ENCODE measurements at regions of chr19 and their contacts with region 1.

Region 1: DNA sequence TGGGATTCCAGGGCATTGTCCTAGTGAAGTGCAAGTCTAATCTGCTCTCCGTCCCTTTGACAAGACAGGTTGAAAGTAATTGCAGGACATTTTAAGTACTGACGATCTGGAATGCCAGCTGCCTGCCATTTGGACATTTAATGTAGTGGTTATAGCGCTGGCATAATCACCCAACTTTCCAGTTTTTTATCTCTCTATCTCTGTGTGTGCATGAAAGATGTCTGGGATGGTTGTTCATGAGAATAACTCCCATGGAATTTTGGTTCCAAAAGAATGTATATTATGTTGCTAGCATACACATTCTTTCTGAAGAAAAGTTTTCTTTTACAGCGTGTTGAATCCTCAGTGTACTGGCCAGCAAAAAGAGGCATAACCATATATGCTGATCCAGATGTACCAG is 53.6 kb downstream of the TDRD12 start:
- DNase-seq: no peak
- H3K4me3 ChIP-seq: no peak overlapping the region
- H3K4me3 Mint-ChIP-seq: no peak overlapping the region
- H3K27ac Mint-ChIP-seq: no peak overlapping the region
- H3K4me1 ChIP-seq: no peaks in the 10 kb centered on the region
- H3K4me1 Mint-ChIP-seq: no peaks in the 10 kb centered on the region
- H3K27me3 ChIP-seq: no peaks in the 10 kb centered on the region
- H3K27me3 Mint-ChIP-seq: peaks cover 3% of the 10 kb centered on the region
- CTCF ChIP-seq: no peak

Region 2: DNA sequence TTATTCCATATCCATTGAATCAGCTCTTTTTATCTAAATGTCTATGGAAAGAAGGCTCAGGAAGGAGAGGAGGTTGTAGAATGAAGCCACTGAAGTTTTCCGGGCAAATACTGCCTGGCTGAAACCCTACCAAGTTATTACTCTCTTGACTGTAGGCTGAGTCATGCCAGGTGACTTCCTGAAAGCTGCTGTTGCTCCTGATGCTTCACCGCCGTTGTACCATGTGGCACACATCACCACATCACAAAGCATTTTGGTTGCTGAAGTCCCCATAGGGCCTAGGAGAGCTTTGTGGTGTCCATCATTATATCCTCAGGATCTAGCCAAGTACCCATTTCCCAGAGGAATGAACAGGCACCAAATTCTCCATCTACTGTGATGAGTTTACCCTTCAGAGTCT is 64.7 kb before region 1 on chr19:
- CTCF ChIA-PET with region 1: no interaction called
- POLR2A ChIA-PET with region 1: no interaction called
- intact Hi-C with region 1: no loop called
- DNase-seq: no peak
- H3K4me3 ChIP-seq: no peak overlapping the region
- H3K4me3 Mint-ChIP-seq: no peak overlapping the region
- H3K27ac Mint-ChIP-seq: no peak overlapping the region
- H3K4me1 ChIP-seq: no peaks in the 10 kb centered on the region
- H3K4me1 Mint-ChIP-seq: no peaks in the 10 kb centered on the region
- H3K27me3 ChIP-seq: no peaks in the 10 kb centered on the region
- H3K27me3 Mint-ChIP-seq: no peaks in the 10 kb centered on the region
- CTCF ChIP-seq: no peak

Region 3: GRCh38 chr19:32748497-32748896 is 24.6 kb before region 1 on chr19:
- CTCF ChIA-PET with region 1: interaction called, 11 read pairs
- POLR2A ChIA-PET with region 1: no interaction called
- intact Hi-C with region 1: no loop called
- DNase-seq: peak in 1 of 2 experiments; percentile 39
- H3K4me3 ChIP-seq: no peak overlapping the region
- H3K4me3 Mint-ChIP-seq: no peak overlapping the region
- H3K27ac Mint-ChIP-seq: no peak overlapping the region
- H3K4me1 ChIP-seq: no peaks in the 10 kb centered on the region
- H3K4me1 Mint-ChIP-seq: no peaks in the 10 kb centered on the region
- H3K27me3 ChIP-seq: no peaks in the 10 kb centered on the region
- H3K27me3 Mint-ChIP-seq: no peaks in the 10 kb centered on the region
- CTCF ChIP-seq: peak; percentile 51 to 69

Region 4: GRCh38 chr19:32809254-32809653 is 36.1 kb after region 1 on chr19:
- CTCF ChIA-PET with region 1: no interaction called
- POLR2A ChIA-PET with region 1: no interaction called
- intact Hi-C with region 1: no loop called
- DNase-seq: no peak
- H3K4me3 ChIP-seq: no peak overlapping the region
- H3K4me3 Mint-ChIP-seq: no peak overlapping the region
- H3K27ac Mint-ChIP-seq: no peak overlapping the region
- H3K4me1 ChIP-seq: peaks cover 17% of the 10 kb centered on the region
- H3K4me1 Mint-ChIP-seq: peaks cover 11% of the 10 kb centered on the region
- H3K27me3 ChIP-seq: no peaks in the 10 kb centered on the region
- H3K27me3 Mint-ChIP-seq: no peaks in the 10 kb centered on the region
- CTCF ChIP-seq: no peak

Region 5: DNA sequence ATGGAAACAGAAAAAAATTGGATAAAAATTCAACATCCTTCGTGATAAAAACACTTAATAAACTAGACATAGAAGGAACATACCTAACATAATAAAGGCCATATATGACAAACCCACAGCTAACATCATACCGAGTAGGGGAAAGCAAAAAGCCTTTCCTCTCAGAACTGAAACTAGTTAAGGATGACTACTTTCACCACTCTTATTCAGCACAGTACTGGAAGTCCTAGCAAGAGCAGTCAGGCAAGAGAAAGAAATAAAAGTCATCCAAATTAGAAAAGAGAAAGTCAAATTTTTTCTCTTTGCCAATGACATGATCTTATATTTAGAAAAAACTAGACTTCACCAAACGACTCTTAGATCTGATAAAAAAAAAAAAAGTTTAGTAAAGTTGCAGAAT is 122.3 kb after region 1 on chr19:
- CTCF ChIA-PET with region 1: no interaction called
- POLR2A ChIA-PET with region 1: no interaction called
- intact Hi-C with region 1: no loop called
- DNase-seq: no peak
- H3K4me3 ChIP-seq: no peak overlapping the region
- H3K4me3 Mint-ChIP-seq: no peak overlapping the region
- H3K27ac Mint-ChIP-seq: no peak overlapping the region
- H3K4me1 ChIP-seq: no peaks in the 10 kb centered on the region
- H3K4me1 Mint-ChIP-seq: no peaks in the 10 kb centered on the region
- H3K27me3 ChIP-seq: no peaks in the 10 kb centered on the region
- H3K27me3 Mint-ChIP-seq: no peaks in the 10 kb centered on the region
- CTCF ChIP-seq: no peak

Measured in Caco-2 (cell line).